ENCODE measurements at regions of chr10 and their contacts with region 1.

Region 1: GRCh38 chr10:100046021-100046486 is 35.6 kb downstream of the CPN1 start:
- DNase-seq: peak; percentile 73
- CTCF ChIP-seq: peak; percentile 87

Region 2: DNA sequence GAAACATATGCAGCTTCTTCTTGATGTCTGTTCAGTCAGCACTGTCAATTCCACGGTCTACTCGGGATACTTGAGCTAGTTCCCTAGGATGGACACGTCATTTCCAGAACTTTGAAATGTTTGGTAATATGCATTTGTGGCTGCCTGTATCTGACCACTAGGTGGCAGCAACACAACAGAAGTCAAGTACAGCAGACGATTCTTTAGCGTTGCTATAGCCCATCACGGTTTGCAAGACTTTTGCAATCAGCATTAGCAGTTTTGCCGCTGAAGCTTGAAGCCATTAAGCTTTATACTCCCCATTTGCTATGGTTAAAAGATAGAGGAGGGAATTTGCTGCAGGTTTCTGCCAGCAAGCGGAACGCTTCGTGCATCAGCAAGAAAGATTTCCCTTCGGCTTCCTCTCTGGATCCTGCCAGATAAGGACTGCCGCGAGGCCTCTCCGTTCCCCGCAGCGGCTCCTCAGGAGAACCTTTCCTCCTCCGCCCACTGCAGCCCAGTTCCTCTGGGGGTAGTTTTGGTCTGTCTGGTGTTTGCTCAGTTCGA is 200.1 kb before region 1 on chr10:
- CTCF ChIA-PET with region 1: interaction called, 231 read pairs
- POLR2A ChIA-PET with region 1: no interaction called
- DNase-seq: peak; percentile 69
- CTCF ChIP-seq: peak; percentile 90

Region 3: GRCh38 chr10:99958302-99958701 is 87.8 kb before region 1 on chr10:
- CTCF ChIA-PET with region 1: interaction called, 10 read pairs
- POLR2A ChIA-PET with region 1: no interaction called
- DNase-seq: no peak
- CTCF ChIP-seq: no peak

Region 4: GRCh38 chr10:99976886-99977665 is 69.0 kb before region 1 on chr10:
- CTCF ChIA-PET with region 1: interaction called, 31 read pairs
- POLR2A ChIA-PET with region 1: no interaction called
- DNase-seq: no peak
- CTCF ChIP-seq: no peak

Region 5: DNA sequence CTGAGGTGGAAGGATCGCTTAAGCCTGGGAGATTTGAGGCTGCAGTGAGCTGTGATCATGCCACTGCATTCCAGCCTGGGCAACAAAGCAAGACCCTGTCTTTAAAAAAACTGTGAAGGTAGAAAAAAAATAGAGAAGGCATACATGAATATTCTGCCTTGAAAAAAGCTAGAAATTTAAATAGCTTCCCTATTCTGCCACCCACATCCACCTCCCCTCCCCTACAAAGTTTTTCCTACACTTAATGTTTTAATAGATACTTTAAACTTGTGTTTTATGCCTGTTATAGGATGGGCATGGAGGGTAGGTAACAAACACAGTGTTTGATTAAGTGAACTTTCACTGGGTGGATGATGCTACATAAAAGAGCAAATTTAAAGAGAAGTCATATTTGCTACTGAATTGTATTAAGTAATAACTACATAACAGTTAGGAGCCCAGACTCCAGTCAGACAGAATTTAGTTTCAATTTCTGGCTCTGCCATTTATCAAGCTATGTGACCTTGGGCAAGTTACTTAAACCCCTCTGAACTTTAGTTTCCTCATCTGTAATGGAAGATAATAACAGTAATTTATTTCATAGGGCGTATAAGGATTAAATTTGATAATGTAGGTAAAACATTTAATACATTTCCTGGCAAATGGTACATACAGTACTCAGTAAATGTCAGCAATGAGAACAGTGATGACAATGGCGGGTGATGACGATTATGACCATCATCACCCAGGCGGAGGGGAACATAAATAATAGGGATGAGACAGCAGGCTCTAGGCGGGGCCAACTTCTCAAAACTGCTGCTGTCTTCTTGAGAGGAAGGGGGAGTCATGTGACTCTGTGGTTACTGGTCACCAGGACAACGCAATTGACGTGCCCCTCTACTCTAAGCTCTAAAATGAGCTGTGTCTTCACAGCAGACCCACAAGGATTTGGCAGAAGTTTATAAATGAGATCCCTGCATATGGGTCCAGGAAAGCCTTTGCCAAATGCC is 52.1 kb before region 1 on chr10:
- CTCF ChIA-PET with region 1: interaction called, 25 read pairs
- POLR2A ChIA-PET with region 1: no interaction called
- DNase-seq: peak; percentile 76
- CTCF ChIP-seq: no peak

Region 6: GRCh38 chr10:100020142-100020885 is 25.7 kb before region 1 on chr10:
- CTCF ChIA-PET with region 1: interaction called, 137 read pairs
- POLR2A ChIA-PET with region 1: interaction called, 3 read pairs
- DNase-seq: peak; percentile 71
- CTCF ChIP-seq: peak; percentile 30

Region 7: GRCh38 chr10:100061401-100061800 is 15.3 kb after region 1 on chr10:
- CTCF ChIA-PET with region 1: interaction called, 23 read pairs
- POLR2A ChIA-PET with region 1: no interaction called
- DNase-seq: no peak
- CTCF ChIP-seq: no peak